HCT116 (cell line): ENCODE measurements at regions of chr16 and their contacts with region 1.

Region 1: DNA sequence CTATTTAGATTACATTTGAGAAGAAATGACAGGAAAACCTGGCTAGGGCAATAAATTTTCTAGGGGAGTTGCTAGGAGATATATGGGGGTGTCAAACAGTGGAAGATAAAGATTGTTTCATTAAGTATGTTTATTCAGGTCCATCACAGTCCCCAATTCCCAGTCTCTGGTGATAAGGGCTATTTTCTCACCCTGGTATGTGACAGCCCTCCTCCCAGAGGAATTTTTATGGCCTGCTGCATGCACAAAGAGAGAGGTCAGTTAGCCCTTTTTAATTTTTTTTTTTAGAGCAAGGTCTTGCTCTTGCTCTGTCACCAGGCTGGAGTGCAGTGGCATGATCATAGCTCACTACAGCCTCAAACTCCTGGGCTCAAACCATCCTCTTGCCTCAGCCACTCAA is 53.6 kb upstream of the ATF7IP2 start:
- DNase-seq: no peak
- ATAC-seq: peak; percentile 40; the same call in 1 of the 2 replicates
- H3K4me3 ChIP-seq: no peak overlapping the region
- H3K27ac ChIP-seq: no peak overlapping the region
- H3K4me1 ChIP-seq: peaks cover 21 to 38% of the 10 kb centered on the region in 2 experiments
- H3K27me3 ChIP-seq: no peaks in the 10 kb centered on the region
- CTCF ChIP-seq: no peak
- POLR2A ChIP-seq: no peak
- RAD21 ChIP-seq: no peak

Region 2: DNA sequence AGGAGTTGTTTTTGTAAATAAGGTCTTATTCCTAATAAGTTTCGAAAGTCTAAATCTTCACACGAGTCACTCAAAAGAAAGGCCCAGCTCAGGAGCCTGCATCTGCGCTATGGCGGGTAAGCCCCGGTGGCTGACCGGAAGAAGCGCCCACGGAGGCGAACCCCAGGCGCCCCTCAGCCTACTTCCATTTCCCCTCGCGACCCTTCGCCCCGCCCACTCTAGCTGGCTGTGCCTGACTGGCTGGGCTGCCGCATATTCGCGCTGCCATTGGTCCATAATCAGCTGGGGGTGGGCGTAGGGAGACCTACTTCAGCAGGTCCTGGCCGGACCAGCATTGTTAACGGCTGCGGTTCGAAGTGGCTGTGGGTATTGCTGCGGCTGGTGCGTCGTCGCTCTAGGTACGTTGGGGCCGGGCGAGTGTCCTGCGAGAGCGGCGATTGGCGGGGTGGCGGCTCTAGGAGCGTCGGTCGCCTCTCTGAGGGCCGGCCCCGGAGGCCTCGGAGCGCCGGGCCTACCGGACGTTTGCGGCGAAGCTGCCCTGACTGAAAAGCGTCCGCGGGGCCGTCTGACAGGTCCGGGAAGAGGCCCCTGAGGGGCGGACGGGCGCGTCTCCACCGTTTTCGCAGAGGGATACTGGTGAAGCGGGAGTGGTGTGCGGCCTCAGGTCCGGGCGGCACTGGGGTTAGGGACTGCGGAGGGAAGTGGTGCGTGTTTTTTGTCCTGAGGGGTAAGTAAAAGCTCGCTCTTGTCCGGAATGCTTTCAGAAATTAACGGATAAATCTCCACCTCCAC is 53.7 kb after region 1 on chr16 and contains the start of gene ATF7IP2:
- CTCF ChIA-PET with region 1: no interaction called
- POLR2A ChIA-PET with region 1: interaction called, 3 read pairs
- RAD21 ChIA-PET with region 1: no interaction called
- intact Hi-C with region 1: loop called (anchors 5 kb)
- DNase-seq: peak; percentile 87
- ATAC-seq: peak; percentile 98
- H3K4me3 ChIP-seq: peak within 1 kb of the TSS; percentile 86 to 92
- H3K27ac ChIP-seq: peak within 1 kb of the TSS; percentile 59
- H3K4me1 ChIP-seq: peaks cover 0 to 16% of the 10 kb centered on the region in 2 experiments; a peak in 2 of 4 replicates
- H3K27me3 ChIP-seq: no peaks in the 10 kb centered on the region
- CTCF ChIP-seq: no peak
- POLR2A ChIP-seq: peak; percentile 97
- RAD21 ChIP-seq: no peak
- total RNA-seq, gene ATF7IP2: 7.4 TPM